MCF 10A (cell line): ENCODE measurements at regions of chr18 and their contacts with region 1.

Region 1: GRCh38 chr18:53567929-53568574 is 656.4 kb downstream of the MBD2 start:
- DNase-seq: peak; percentile 50
- H3K4me3 Mint-ChIP-seq: no peak overlapping the region
- H3K27ac Mint-ChIP-seq: no peak overlapping the region
- H3K4me1 Mint-ChIP-seq: no peaks in the 10 kb centered on the region
- H3K27me3 Mint-ChIP-seq: peaks cover 21% of the 10 kb centered on the region
- CTCF ChIP-seq: peak; percentile 39

Region 2: DNA sequence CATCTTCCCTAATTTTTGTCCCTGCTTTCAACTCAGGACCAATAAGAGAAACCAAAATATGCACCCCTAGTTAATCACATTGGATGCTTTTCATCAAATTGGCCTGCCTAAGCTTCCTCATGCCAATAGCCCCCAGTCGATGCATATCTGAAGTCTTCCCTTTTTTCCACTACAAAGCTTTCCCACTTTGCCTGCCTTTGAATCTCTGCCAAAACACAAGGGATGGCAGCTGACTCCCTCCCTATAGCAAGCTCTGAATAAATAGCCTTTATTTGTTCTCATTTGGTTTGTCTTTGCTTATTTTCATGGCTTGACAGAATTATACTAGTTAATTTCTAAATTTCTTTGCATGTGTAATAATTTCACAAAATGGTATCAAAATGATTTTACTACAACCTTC is 35.2 kb after region 1 on chr18:
- CTCF ChIA-PET with region 1: no interaction called
- POLR2A ChIA-PET with region 1: no interaction called
- intact Hi-C with region 1: no loop called
- DNase-seq: no peak
- H3K4me3 Mint-ChIP-seq: no peak overlapping the region
- H3K27ac Mint-ChIP-seq: no peak overlapping the region
- H3K4me1 Mint-ChIP-seq: no peaks in the 10 kb centered on the region
- H3K27me3 Mint-ChIP-seq: no peaks in the 10 kb centered on the region
- CTCF ChIP-seq: no peak

Region 3: GRCh38 chr18:53864770-53865169 is 296.7 kb after region 1 on chr18:
- CTCF ChIA-PET with region 1: no interaction called
- POLR2A ChIA-PET with region 1: no interaction called
- intact Hi-C with region 1: loop called (anchors 2 kb)
- DNase-seq: peak; percentile 39
- H3K4me3 Mint-ChIP-seq: no peak overlapping the region
- H3K27ac Mint-ChIP-seq: no peak overlapping the region
- H3K4me1 Mint-ChIP-seq: no peaks in the 10 kb centered on the region
- H3K27me3 Mint-ChIP-seq: no peaks in the 10 kb centered on the region
- CTCF ChIP-seq: peak; percentile 21

Region 4: DNA sequence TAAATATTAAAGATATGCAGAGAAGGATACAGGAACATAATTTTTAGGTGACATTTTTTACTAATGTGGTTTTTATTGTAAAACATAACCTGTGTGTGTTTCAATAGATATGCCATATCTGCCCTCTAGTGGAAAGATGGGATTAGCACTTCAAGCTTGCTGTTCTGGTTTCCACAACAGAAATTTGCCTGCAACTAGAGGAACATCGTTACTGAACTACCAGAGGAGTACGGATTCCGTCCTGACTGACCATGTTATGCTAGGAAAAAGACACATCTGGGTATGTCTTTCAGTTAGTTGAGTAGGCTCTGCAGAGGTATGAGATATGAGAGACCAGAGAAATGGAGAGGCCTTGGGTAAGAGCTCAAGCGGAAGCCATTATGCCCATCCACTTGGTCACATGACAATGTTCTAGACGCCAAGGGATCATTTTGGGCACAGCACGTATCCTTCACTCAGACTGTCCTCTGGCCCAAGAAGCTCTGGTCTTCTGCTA is 551.5 kb after region 1 on chr18:
- CTCF ChIA-PET with region 1: interaction called, 18 read pairs
- POLR2A ChIA-PET with region 1: no interaction called
- intact Hi-C with region 1: loop called (anchors 1 kb)
- DNase-seq: peak; percentile 68
- H3K4me3 Mint-ChIP-seq: peak overlapping the region; percentile 3
- H3K27ac Mint-ChIP-seq: peak overlapping the region; percentile 62
- H3K4me1 Mint-ChIP-seq: peaks cover 13% of the 10 kb centered on the region
- H3K27me3 Mint-ChIP-seq: no peaks in the 10 kb centered on the region
- CTCF ChIP-seq: peak; percentile 44

Region 5: GRCh38 chr18:54127759-54128378 is 559.8 kb after region 1 on chr18:
- CTCF ChIA-PET with region 1: interaction called, 16 read pairs
- POLR2A ChIA-PET with region 1: no interaction called
- intact Hi-C with region 1: loop called (anchors 1 kb)
- DNase-seq: peak; percentile 67
- H3K4me3 Mint-ChIP-seq: no peak overlapping the region
- H3K27ac Mint-ChIP-seq: no peak overlapping the region
- H3K4me1 Mint-ChIP-seq: peaks cover 9% of the 10 kb centered on the region
- H3K27me3 Mint-ChIP-seq: no peaks in the 10 kb centered on the region
- CTCF ChIP-seq: peak; percentile 59